CD8-positive, alpha-beta T cell (primary cell): ENCODE measurements at regions of chr1 and their contacts with region 1.

Region 1: GRCh38 chr1:8423650-8424538 is 106.0 kb downstream of the SLC45A1 start:
- DNase-seq: peak in 8 of 9 experiments; percentile 32 to 74 (median 57)
- ATAC-seq: peak; percentile 56
- H3K4me3 ChIP-seq: peak overlapping the region; percentile 62 to 75
- H3K4me3 Mint-ChIP-seq: peak overlapping the region; percentile 92
- H3K27ac ChIP-seq: peak overlapping the region; percentile 49 to 61
- H3K27ac Mint-ChIP-seq: peak overlapping the region; percentile 97
- H3K4me1 ChIP-seq: peaks cover 79% of the 10 kb centered on the region
- H3K4me1 Mint-ChIP-seq: peaks cover 44% of the 10 kb centered on the region
- H3K27me3 ChIP-seq: no peaks in the 10 kb centered on the region
- H3K27me3 Mint-ChIP-seq: no peaks in the 10 kb centered on the region
- CTCF ChIP-seq: no peak

Region 2: DNA sequence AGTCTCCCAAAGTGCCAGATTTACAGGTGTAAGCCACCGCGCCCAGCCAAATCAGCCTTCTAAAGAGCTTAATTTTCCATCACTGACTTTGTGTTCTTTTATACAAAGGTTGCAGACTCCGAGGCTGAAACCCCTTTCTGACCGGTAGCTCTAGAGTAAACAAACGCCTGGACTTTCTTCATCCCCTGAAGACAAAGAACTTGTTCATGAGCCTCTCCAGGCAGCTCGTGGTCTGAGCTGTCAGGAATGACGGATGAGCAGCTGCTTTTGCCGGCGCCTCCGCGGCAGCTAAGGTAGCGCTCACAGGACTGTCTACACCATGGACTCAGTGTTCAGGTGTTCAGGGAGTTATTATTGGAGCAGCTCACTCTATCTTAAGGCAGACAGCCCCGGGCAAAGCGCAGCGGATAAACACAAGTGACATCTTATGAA is 269.3 kb before region 1 on chr1:
- CTCF ChIA-PET with region 1: no interaction called
- POLR2A ChIA-PET with region 1: no interaction called
- intact Hi-C with region 1: loop called in 1 of 2 experiments (anchors 5 kb)
- DNase-seq: no peak
- ATAC-seq: no peak
- H3K4me3 ChIP-seq: no peak overlapping the region
- H3K4me3 Mint-ChIP-seq: no peak overlapping the region
- H3K27ac ChIP-seq: no peak overlapping the region
- H3K27ac Mint-ChIP-seq: no peak overlapping the region
- H3K4me1 ChIP-seq: peaks cover 44% of the 10 kb centered on the region
- H3K4me1 Mint-ChIP-seq: peaks cover 45% of the 10 kb centered on the region
- H3K27me3 ChIP-seq: no peaks in the 10 kb centered on the region
- H3K27me3 Mint-ChIP-seq: peaks cover 4% of the 10 kb centered on the region
- CTCF ChIP-seq: no peak

Region 3: GRCh38 chr1:8409106-8409505 is 14.8 kb before region 1 on chr1:
- CTCF ChIA-PET with region 1: interaction called, 10 read pairs
- POLR2A ChIA-PET with region 1: interaction called, 7 read pairs
- intact Hi-C with region 1: loop called in 1 of 2 experiments (anchors 2 kb)
- DNase-seq: peak in 2 of 9 experiments; percentile 49 to 51
- ATAC-seq: peak; percentile 63
- H3K4me3 ChIP-seq: no peak overlapping the region
- H3K4me3 Mint-ChIP-seq: no peak overlapping the region
- H3K27ac ChIP-seq: no peak overlapping the region
- H3K27ac Mint-ChIP-seq: peak overlapping the region; percentile 20
- H3K4me1 ChIP-seq: peaks cover 34% of the 10 kb centered on the region
- H3K4me1 Mint-ChIP-seq: peaks cover 70% of the 10 kb centered on the region
- H3K27me3 ChIP-seq: no peaks in the 10 kb centered on the region
- H3K27me3 Mint-ChIP-seq: no peaks in the 10 kb centered on the region
- CTCF ChIP-seq: peak; percentile 15

Region 4: GRCh38 chr1:8525558-8526275 is 101.8 kb after region 1 on chr1:
- CTCF ChIA-PET with region 1: no interaction called
- POLR2A ChIA-PET with region 1: interaction called, 7 read pairs
- intact Hi-C with region 1: loop called (anchors 2 to 5 kb)
- DNase-seq: peak; percentile 35 to 92 (median 60)
- ATAC-seq: peak; percentile 93
- H3K4me3 ChIP-seq: peak overlapping the region; percentile 44 to 71
- H3K4me3 Mint-ChIP-seq: no peak overlapping the region
- H3K27ac ChIP-seq: peak overlapping the region; percentile 71 to 92
- H3K27ac Mint-ChIP-seq: no peak overlapping the region
- H3K4me1 ChIP-seq: peaks cover 44% of the 10 kb centered on the region
- H3K4me1 Mint-ChIP-seq: peaks cover 43% of the 10 kb centered on the region
- H3K27me3 ChIP-seq: no peaks in the 10 kb centered on the region
- H3K27me3 Mint-ChIP-seq: no peaks in the 10 kb centered on the region
- CTCF ChIP-seq: no peak

Region 5: GRCh38 chr1:8817406-8818324 is 393.8 kb after region 1 on chr1 and contains the start of gene RERE:
- CTCF ChIA-PET with region 1: no interaction called
- POLR2A ChIA-PET with region 1: no interaction called
- intact Hi-C with region 1: loop called in 1 of 2 experiments (anchors 5 kb)
- DNase-seq: peak; percentile 91 to 99 (median 97)
- ATAC-seq: peak; percentile 96
- H3K4me3 ChIP-seq: peak within 1 kb of the TSS; percentile 84 to 98
- H3K4me3 Mint-ChIP-seq: peak within 1 kb of the TSS; percentile 92
- H3K27ac ChIP-seq: peak within 1 kb of the TSS; percentile 85 to 90
- H3K27ac Mint-ChIP-seq: peak within 1 kb of the TSS; percentile 90
- H3K4me1 ChIP-seq: peaks cover 24% of the 10 kb centered on the region
- H3K4me1 Mint-ChIP-seq: peaks cover 41% of the 10 kb centered on the region
- H3K27me3 ChIP-seq: no peaks in the 10 kb centered on the region
- H3K27me3 Mint-ChIP-seq: no peaks in the 10 kb centered on the region
- CTCF ChIP-seq: no peak
- total RNA-seq, gene RERE: 62.8 to 68.4 TPM

Region 6: DNA sequence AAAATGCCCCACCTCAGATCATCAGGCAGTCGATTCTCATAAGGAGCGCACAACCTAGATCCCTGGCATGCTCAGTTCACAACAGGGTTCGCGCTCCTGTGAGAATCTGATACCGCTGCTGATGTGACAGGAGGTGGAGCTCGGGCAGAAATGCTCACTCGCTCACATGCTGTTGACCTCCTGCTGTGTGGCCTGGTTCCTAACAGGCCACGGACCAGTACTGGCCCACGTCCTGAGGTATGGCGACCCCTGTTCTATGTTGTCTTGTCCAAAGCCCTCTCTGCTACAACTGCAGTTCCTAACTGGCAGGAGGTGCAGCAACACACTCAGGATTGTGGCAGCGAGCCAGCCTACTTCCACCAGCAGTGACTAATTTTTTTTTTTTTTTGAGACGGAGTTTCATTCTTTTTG is 1329.2 kb after region 1 on chr1:
- CTCF ChIA-PET with region 1: no interaction called
- POLR2A ChIA-PET with region 1: no interaction called
- intact Hi-C with region 1: no loop called
- DNase-seq: no peak
- ATAC-seq: no peak
- H3K4me3 ChIP-seq: no peak overlapping the region
- H3K4me3 Mint-ChIP-seq: no peak overlapping the region
- H3K27ac ChIP-seq: no peak overlapping the region
- H3K27ac Mint-ChIP-seq: no peak overlapping the region
- H3K4me1 ChIP-seq: no peaks in the 10 kb centered on the region
- H3K4me1 Mint-ChIP-seq: peaks cover 11% of the 10 kb centered on the region
- H3K27me3 ChIP-seq: no peaks in the 10 kb centered on the region
- H3K27me3 Mint-ChIP-seq: no peaks in the 10 kb centered on the region
- CTCF ChIP-seq: no peak